A549 (cell line): ENCODE measurements at regions of chr15 and their contacts with region 1.

Region 1: DNA sequence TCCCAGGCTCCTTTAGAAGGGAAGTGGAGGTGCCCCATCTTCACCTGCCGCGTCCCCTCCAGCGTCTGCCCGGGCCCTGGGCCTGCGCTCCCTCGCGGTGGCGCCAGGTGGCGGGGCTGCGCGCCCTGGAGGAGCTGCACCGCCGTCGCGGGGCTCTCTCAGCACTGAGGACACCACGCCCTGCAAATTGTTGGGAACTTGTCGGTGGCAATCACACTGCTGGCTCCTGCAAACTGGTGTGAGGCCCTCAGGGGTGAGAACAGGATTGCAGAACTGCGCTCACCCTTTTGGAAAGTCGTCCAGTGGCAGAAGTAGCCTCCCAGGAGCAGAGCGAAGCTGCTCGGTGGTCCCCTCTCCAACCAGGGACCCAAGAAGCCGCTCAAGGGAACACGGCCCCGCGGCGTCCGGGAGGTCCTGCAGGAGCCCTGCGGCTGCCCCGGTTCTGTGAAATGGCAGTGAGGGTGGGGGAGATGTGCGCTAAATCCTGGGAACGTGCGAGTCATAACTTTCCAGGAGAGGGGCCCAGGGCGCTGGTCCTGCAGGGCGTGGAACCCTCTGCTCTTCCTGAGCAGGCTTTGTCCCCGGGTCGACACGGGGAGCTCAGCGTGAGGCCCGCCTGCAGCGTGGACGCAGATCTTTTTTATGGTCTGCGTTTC is 995 bp upstream of the LRRK1 start:
- DNase-seq: peak; percentile 92 to 97
- ATAC-seq: peak; percentile 81 to 94
- H3K4me3 ChIP-seq: peak overlapping the region; percentile 79
- H3K27ac ChIP-seq: peak overlapping the region; percentile 94 to 95
- H3K4me1 ChIP-seq: peaks cover 17% of the 10 kb centered on the region
- CTCF ChIP-seq: peak; percentile 97
- EP300 ChIP-seq: no peak
- POLR2A ChIP-seq: peak; percentile 55
- RAD21 ChIP-seq: peak; percentile 90 to 97

Region 2: GRCh38 chr15:100686725-100687473 is 231.3 kb before region 1 on chr15:
- CTCF ChIA-PET with region 1: interaction called, 12 read pairs
- POLR2A ChIA-PET with region 1: no interaction called
- DNase-seq: no peak
- ATAC-seq: no peak
- H3K4me3 ChIP-seq: no peak overlapping the region
- H3K27ac ChIP-seq: no peak overlapping the region
- H3K4me1 ChIP-seq: 0 out of 3 replicates have a peak, but pooled peaks cover 4% of the 10 kb centered on the region
- CTCF ChIP-seq: no peak
- EP300 ChIP-seq: no peak
- POLR2A ChIP-seq: no peak
- RAD21 ChIP-seq: no peak

Region 3: GRCh38 chr15:100902436-100903167 is 15.6 kb before region 1 on chr15:
- CTCF ChIA-PET with region 1: interaction called, 67 read pairs
- POLR2A ChIA-PET with region 1: interaction called, 4 read pairs
- DNase-seq: no peak
- ATAC-seq: no peak; a peak in 1 of 6 replicates
- H3K4me3 ChIP-seq: no peak overlapping the region
- H3K27ac ChIP-seq: no peak overlapping the region
- H3K4me1 ChIP-seq: no peaks in the 10 kb centered on the region
- CTCF ChIP-seq: no peak
- EP300 ChIP-seq: no peak
- POLR2A ChIP-seq: no peak
- RAD21 ChIP-seq: no peak

Region 4: DNA sequence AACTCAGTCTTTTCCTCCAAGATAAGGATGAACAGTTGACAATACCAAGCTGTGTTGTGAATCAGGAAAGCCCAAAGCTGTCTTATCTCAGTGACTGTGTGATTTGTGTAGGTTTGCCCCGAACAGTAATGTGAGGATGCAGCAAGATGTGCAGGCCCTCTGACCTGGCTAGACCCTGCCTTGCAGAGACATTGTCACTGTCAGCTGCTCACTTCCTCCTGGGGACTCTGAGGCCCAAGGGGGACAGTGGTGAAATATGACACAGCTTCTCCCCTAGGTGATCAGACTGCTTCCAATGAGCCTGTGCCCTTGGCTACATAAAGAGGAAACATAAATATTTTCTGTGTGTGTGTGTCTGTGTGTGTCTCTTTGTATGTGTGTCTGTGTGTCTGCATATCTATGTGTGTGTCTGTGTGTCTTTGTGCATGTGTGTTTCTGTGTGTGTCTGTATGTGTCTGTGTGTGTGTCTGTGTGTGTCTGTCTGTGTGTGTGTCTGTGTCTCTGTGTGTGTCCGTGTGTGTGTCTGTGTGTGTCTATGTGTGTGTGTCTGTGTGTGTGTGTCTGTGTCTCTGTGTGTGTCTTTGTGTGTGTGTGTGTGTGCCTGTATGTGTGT is 22.7 kb after region 1 on chr15:
- CTCF ChIA-PET with region 1: interaction called, 33 read pairs
- POLR2A ChIA-PET with region 1: interaction called, 3 read pairs
- DNase-seq: no peak
- ATAC-seq: no peak
- H3K4me3 ChIP-seq: no peak overlapping the region
- H3K27ac ChIP-seq: peak overlapping the region in 1 of 2 experiments; percentile 24; a peak in 1 of 6 replicates
- H3K4me1 ChIP-seq: peaks cover 7% of the 10 kb centered on the region; the same call in 2 of the 3 replicates
- CTCF ChIP-seq: no peak
- EP300 ChIP-seq: no peak
- POLR2A ChIP-seq: no peak
- RAD21 ChIP-seq: no peak

Region 5: DNA sequence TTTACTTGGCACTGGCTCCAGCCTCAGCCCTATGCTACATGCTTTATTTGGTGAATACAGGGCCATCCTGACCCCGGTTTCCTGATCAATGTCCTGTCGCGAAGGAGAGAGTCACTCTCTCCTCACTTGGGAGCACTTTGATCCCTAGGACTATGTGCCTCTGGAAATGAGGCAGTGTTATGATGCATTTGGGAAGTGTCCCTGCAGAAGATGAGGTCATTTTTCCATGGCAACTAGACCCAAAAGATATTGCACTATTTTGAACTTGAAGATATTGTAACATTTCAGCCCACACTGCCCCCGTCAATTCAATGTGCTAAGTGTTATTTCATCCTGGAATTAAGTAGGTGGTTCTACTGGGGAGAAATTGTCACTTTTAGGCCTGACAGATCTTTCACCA is 69.0 kb after region 1 on chr15:
- CTCF ChIA-PET with region 1: interaction called, 55 read pairs
- POLR2A ChIA-PET with region 1: interaction called, 4 read pairs
- DNase-seq: peak in 1 of 2 experiments; percentile 21
- ATAC-seq: peak; percentile 52 to 61; a peak in 4 of 6 replicates
- H3K4me3 ChIP-seq: no peak overlapping the region
- H3K27ac ChIP-seq: peak overlapping the region; percentile 32 to 74; a peak in 5 of 6 replicates
- H3K4me1 ChIP-seq: peaks cover 23% of the 10 kb centered on the region
- CTCF ChIP-seq: no peak
- EP300 ChIP-seq: no peak
- POLR2A ChIP-seq: no peak
- RAD21 ChIP-seq: no peak